Activated naive CD4-positive, alpha-beta T cell treated with anti-CD3 and anti-CD28 coated beads for 36 hours (primary cell): ENCODE measurements at regions of chr3 and their contacts with region 1.

Region 1: GRCh38 chr3:105868742-105869530 is at the start of gene CBLB:
- DNase-seq: peak; percentile 90
- H3K4me3 Mint-ChIP-seq: peak within 1 kb of the TSS; percentile 94
- H3K27ac Mint-ChIP-seq: peak within 1 kb of the TSS; percentile 93
- H3K4me1 Mint-ChIP-seq: peaks cover 29% of the 10 kb centered on the region
- H3K27me3 Mint-ChIP-seq: no peaks in the 10 kb centered on the region
- total RNA-seq, gene CBLB: 72.8 to 78.9 TPM

Region 2: GRCh38 chr3:104768886-104769285 is 1100.0 kb before region 1 on chr3:
- CTCF ChIA-PET with region 1: no interaction called
- intact Hi-C with region 1: no loop called
- DNase-seq: no peak
- H3K4me3 Mint-ChIP-seq: no peak overlapping the region
- H3K27ac Mint-ChIP-seq: no peak overlapping the region
- H3K4me1 Mint-ChIP-seq: no peaks in the 10 kb centered on the region
- H3K27me3 Mint-ChIP-seq: no peaks in the 10 kb centered on the region

Region 3: GRCh38 chr3:105686278-105686897 is 182.5 kb before region 1 on chr3:
- CTCF ChIA-PET with region 1: no interaction called
- intact Hi-C with region 1: loop called (anchors 2 kb)
- DNase-seq: no peak
- H3K4me3 Mint-ChIP-seq: no peak overlapping the region
- H3K27ac Mint-ChIP-seq: no peak overlapping the region
- H3K4me1 Mint-ChIP-seq: peaks cover 26% of the 10 kb centered on the region
- H3K27me3 Mint-ChIP-seq: no peaks in the 10 kb centered on the region

Region 4: GRCh38 chr3:105715372-105715771 is 153.6 kb before region 1 on chr3:
- CTCF ChIA-PET with region 1: no interaction called
- intact Hi-C with region 1: no loop called
- DNase-seq: no peak
- H3K4me3 Mint-ChIP-seq: no peak overlapping the region
- H3K27ac Mint-ChIP-seq: no peak overlapping the region
- H3K4me1 Mint-ChIP-seq: peaks cover 12% of the 10 kb centered on the region
- H3K27me3 Mint-ChIP-seq: no peaks in the 10 kb centered on the region

Region 5: DNA sequence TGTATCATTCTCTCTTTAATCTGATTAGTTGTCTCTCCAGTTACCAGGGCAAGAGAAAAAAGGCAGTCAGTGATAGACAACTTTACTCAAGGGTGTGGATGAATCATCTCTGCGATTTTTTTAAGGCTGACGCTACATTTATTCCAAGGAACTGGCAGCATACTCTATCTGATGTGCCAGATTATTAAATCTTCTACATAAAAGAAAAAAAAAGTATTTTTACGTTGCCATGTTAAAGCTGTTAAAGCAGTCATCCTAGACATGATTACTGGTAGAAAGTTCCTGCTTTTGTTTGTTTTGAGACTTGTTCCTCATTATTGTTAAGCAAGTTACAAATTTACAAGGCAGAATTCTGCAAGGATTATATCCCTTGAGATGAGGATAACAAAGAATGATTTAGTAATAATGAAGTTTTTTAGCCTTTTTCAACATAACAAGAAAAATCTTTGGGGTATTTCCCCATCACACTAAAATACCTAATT is 121.8 kb before region 1 on chr3:
- CTCF ChIA-PET with region 1: no interaction called
- intact Hi-C with region 1: loop called (anchors 2 kb)
- DNase-seq: no peak
- H3K4me3 Mint-ChIP-seq: no peak overlapping the region
- H3K27ac Mint-ChIP-seq: peak overlapping the region; percentile 79
- H3K4me1 Mint-ChIP-seq: peaks cover 76% of the 10 kb centered on the region
- H3K27me3 Mint-ChIP-seq: no peaks in the 10 kb centered on the region

Region 6: GRCh38 chr3:105774444-105775180 is 94.3 kb before region 1 on chr3:
- CTCF ChIA-PET with region 1: no interaction called
- intact Hi-C with region 1: loop called (anchors 1 kb)
- DNase-seq: no peak
- H3K4me3 Mint-ChIP-seq: no peak overlapping the region
- H3K27ac Mint-ChIP-seq: peak overlapping the region; percentile 26
- H3K4me1 Mint-ChIP-seq: peaks cover 74% of the 10 kb centered on the region
- H3K27me3 Mint-ChIP-seq: no peaks in the 10 kb centered on the region

Region 7: DNA sequence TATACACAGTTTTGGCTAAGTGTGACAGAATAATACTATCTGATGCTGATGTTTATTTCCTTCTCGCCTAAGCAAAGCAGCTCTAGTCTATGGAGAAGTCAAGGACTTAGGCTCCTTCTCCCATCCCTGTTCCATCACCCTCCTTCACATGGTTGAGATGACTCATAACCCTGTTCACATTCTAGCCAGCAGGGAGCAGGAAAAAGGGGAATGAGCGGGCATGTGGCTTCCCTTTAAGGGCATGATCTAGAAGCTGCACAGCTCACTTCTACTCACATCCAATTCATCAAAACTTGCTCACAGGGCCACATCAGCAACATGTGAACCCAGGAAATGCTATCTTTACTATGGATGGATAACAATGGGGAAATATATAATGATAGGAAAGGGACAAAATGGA is 41.0 kb before region 1 on chr3:
- CTCF ChIA-PET with region 1: no interaction called
- intact Hi-C with region 1: loop called (anchors 1 kb)
- DNase-seq: peak; percentile 26
- H3K4me3 Mint-ChIP-seq: peak overlapping the region; percentile 41
- H3K27ac Mint-ChIP-seq: peak overlapping the region; percentile 99
- H3K4me1 Mint-ChIP-seq: peaks cover 84% of the 10 kb centered on the region
- H3K27me3 Mint-ChIP-seq: no peaks in the 10 kb centered on the region

Region 8: GRCh38 chr3:106119614-106120082 is 250.7 kb after region 1 on chr3:
- CTCF ChIA-PET with region 1: no interaction called
- intact Hi-C with region 1: loop called (anchors 2 kb)
- DNase-seq: peak; percentile 57
- H3K4me3 Mint-ChIP-seq: no peak overlapping the region
- H3K27ac Mint-ChIP-seq: peak overlapping the region; percentile 73
- H3K4me1 Mint-ChIP-seq: peaks cover 28% of the 10 kb centered on the region
- H3K27me3 Mint-ChIP-seq: no peaks in the 10 kb centered on the region

Region 9: GRCh38 chr3:106423321-106424225 is 554.6 kb after region 1 on chr3:
- CTCF ChIA-PET with region 1: no interaction called
- intact Hi-C with region 1: loop called (anchors 2 kb)
- DNase-seq: peak; percentile 55
- H3K4me3 Mint-ChIP-seq: no peak overlapping the region
- H3K27ac Mint-ChIP-seq: peak overlapping the region; percentile 80
- H3K4me1 Mint-ChIP-seq: peaks cover 46% of the 10 kb centered on the region
- H3K27me3 Mint-ChIP-seq: peaks cover 2% of the 10 kb centered on the region